Posterior vena cava (tissue), 2 donors: ENCODE measurements at regions of chr2 and their contacts with region 1.

Region 1: GRCh38 chr2:4110273-4110672 is 406.9 kb downstream of the DCDC2C start:
- DNase-seq: no peak

Region 2: GRCh38 chr2:4090700-4091630 is 19.3 kb before region 1 on chr2:
- intact Hi-C with region 1: loop called in 1 of 2 experiments (anchors 2 kb)
- DNase-seq: no peak

Region 3: DNA sequence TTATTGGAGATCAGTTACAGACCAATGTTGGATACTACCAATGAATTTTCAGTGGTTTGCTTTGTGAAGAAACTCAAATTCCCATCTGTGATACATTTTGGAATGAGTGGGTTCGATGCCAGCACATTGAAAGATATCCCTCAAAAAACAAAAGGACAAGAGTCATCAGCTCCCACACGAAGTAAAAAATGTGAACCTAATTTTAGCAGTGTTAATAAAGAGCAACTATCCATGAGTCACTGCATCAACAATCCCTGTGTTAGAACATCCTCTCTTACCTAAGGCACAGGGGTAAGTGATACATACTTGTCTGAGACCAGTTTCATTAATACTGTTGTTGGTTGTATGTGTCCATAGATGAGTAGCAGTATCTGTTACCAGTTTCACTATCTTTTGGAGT is 1030.1 kb after region 1 on chr2:
- intact Hi-C with region 1: no loop called
- DNase-seq: no peak